CD4-positive, alpha-beta memory T cell (primary cell): ENCODE measurements at regions of chr19 and their contacts with region 1.

Region 1: DNA sequence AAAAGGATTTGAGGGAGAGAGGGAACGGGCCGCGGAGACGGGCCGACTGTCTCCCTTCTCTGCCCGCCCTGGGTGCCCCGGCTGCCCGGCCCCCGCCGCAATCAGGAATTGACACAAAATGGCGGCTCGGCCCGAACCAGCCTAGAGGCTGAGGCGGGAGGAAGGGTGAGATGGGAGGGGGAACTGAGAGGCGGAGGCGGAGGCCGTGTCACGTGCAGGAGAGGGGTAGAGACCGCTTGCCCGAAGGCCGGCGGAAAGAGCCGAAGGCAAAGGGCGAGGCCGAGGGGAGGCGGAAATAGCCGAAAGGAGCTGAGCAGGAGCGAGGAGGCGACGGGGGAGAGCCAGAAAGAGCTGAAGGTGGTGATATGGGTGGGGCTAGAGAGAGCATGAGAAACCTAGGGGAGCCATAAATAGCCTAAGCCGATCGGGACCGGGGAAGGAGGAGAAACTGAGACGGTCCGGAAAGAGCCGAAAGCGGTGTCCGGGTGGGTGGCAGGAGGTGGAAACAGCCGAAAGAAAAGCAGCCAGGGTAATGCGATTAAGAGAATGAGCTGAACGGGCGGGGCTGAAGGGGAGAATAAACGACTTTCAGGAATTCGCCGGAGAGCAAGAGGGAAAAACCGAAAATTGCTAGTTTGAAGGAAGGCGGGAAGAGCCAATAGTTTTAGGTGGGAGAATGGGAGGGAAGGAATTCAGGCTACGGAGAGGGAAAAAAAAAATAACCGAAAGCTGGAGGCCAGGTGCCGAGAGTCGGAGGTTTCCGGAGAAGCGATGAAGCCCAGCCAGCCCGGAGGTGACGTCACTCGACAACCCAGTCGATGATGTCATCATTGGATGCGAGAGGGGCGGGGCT is at the start of gene ZC3H4:
- DNase-seq: peak; percentile 100
- H3K4me3 ChIP-seq: peak within 1 kb of the TSS; percentile 90 to 95
- H3K4me3 Mint-ChIP-seq: peak within 1 kb of the TSS; percentile 97 to 100 (median 98)
- H3K27ac ChIP-seq: peak within 1 kb of the TSS; percentile 98
- H3K27ac Mint-ChIP-seq: peak within 1 kb of the TSS; percentile 99 to 100 (median 100)
- H3K4me1 ChIP-seq: peaks cover 28% of the 10 kb centered on the region
- H3K4me1 Mint-ChIP-seq: peaks cover 17 to 46% (median 28%) of the 10 kb centered on the region in 4 donors
- H3K27me3 ChIP-seq: no peaks in the 10 kb centered on the region
- H3K27me3 Mint-ChIP-seq: no peaks in the 10 kb centered on the region
- total RNA-seq, gene ZC3H4: 74.8 to 75.7 TPM

Region 2: GRCh38 chr19:46717034-46717723 is 396.0 kb before region 1 on chr19 and contains the start of gene PRKD2:
- CTCF ChIA-PET with region 1: no interaction called
- POLR2A ChIA-PET with region 1: interaction called, 17 read pairs
- intact Hi-C with region 1: no loop called
- DNase-seq: peak; percentile 76 to 85 (median 79)
- H3K4me3 ChIP-seq: peak within 1 kb of the TSS; percentile 82 to 94
- H3K4me3 Mint-ChIP-seq: peak within 1 kb of the TSS; percentile 93 to 98 (median 94)
- H3K27ac ChIP-seq: peak within 1 kb of the TSS; percentile 95
- H3K27ac Mint-ChIP-seq: peak within 1 kb of the TSS; percentile 97 to 99 (median 98)
- H3K4me1 ChIP-seq: peaks cover 44% of the 10 kb centered on the region
- H3K4me1 Mint-ChIP-seq: peaks cover 23 to 64% (median 37%) of the 10 kb centered on the region in 4 donors
- H3K27me3 ChIP-seq: no peaks in the 10 kb centered on the region
- H3K27me3 Mint-ChIP-seq: no peaks in the 10 kb centered on the region
- total RNA-seq, gene PRKD2: 115 to 122 TPM

Region 3: DNA sequence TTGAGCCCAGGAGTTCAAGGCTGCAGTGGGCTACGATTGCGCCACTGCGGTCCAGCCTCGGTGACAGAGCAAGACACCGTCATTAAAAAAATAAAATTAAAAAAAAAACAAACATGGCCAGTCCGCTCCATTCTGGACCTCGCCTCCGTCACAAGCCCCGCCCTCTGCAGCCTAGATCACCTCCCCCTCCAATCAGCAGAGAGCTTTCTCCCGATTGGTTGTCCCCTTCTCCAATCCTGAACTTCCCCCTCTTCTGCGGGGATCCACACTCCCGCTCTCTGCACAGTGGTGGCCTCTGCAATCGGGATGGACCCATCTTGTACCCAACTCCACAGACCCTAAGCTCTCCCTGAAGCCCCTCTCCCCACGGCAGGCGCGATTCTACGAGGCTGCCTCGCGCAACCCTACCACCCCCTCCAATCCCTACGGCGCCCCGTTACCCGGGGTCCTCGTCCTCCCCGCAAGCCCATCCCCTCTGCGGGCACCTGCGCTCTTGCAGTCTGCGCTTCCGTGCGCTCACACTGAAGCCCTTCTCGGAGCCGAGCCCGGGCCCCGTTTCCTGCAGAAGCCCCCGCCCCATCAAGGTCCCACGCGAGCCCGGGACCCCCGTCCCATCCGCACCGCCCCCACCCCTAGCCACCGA is 65.3 kb before region 1 on chr19:
- CTCF ChIA-PET with region 1: no interaction called
- POLR2A ChIA-PET with region 1: interaction called, 20 read pairs
- intact Hi-C with region 1: loop called (anchors 1 kb)
- DNase-seq: peak; percentile 59 to 82 (median 63)
- H3K4me3 ChIP-seq: peak overlapping the region; percentile 61 to 71
- H3K4me3 Mint-ChIP-seq: peak overlapping the region; percentile 95 to 98 (median 97)
- H3K27ac ChIP-seq: peak overlapping the region; percentile 68
- H3K27ac Mint-ChIP-seq: peak overlapping the region; percentile 67 to 98 (median 96)
- H3K4me1 ChIP-seq: peaks cover 13% of the 10 kb centered on the region
- H3K4me1 Mint-ChIP-seq: peaks cover 7 to 21% (median 14%) of the 10 kb centered on the region in 4 donors
- H3K27me3 ChIP-seq: no peaks in the 10 kb centered on the region
- H3K27me3 Mint-ChIP-seq: no peaks in the 10 kb centered on the region

Region 4: DNA sequence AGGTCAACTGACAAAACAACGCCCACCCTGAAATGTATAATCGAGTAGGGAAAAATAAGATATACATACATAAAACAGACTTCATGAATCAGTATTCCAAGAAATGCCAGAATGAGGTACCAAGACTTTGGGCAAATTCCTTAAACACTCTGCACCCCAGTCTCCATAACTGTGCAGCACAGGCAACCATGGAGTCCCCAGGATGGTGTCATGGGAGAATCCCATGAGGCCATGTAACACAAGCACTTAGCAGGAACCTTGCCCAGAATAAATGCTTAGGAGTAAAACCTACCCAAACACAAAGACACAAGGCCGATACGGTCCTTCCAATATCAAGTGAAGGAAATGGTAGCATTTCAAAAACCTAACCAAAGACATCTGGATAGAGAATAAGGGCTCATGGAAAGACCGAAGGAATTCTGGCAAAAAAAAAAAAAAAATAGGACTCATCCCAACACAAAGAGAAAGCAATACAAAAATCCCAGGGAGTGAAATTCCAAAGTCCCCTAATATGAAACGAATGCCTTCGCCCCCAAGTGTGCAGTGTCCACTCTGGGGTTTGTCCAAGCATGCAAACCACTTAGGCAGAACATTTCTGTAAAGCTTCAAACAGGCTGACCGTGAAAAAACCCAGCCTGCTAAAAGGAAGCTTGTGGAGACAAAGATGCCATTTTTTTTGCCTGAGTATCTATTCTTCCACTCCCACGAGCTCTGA is 10.7 kb before region 1 on chr19:
- CTCF ChIA-PET with region 1: interaction called, 35 read pairs
- POLR2A ChIA-PET with region 1: interaction called, 307 read pairs
- intact Hi-C with region 1: no loop called
- DNase-seq: no peak
- H3K4me3 ChIP-seq: no peak overlapping the region
- H3K4me3 Mint-ChIP-seq: no peak overlapping the region
- H3K27ac ChIP-seq: no peak overlapping the region
- H3K27ac Mint-ChIP-seq: peak overlapping the region in 2 of 7 donors; percentile 64 to 75
- H3K4me1 ChIP-seq: peaks cover 45% of the 10 kb centered on the region
- H3K4me1 Mint-ChIP-seq: peaks cover 32 to 72% (median 49%) of the 10 kb centered on the region in 4 donors
- H3K27me3 ChIP-seq: no peaks in the 10 kb centered on the region
- H3K27me3 Mint-ChIP-seq: no peaks in the 10 kb centered on the region

Region 5: DNA sequence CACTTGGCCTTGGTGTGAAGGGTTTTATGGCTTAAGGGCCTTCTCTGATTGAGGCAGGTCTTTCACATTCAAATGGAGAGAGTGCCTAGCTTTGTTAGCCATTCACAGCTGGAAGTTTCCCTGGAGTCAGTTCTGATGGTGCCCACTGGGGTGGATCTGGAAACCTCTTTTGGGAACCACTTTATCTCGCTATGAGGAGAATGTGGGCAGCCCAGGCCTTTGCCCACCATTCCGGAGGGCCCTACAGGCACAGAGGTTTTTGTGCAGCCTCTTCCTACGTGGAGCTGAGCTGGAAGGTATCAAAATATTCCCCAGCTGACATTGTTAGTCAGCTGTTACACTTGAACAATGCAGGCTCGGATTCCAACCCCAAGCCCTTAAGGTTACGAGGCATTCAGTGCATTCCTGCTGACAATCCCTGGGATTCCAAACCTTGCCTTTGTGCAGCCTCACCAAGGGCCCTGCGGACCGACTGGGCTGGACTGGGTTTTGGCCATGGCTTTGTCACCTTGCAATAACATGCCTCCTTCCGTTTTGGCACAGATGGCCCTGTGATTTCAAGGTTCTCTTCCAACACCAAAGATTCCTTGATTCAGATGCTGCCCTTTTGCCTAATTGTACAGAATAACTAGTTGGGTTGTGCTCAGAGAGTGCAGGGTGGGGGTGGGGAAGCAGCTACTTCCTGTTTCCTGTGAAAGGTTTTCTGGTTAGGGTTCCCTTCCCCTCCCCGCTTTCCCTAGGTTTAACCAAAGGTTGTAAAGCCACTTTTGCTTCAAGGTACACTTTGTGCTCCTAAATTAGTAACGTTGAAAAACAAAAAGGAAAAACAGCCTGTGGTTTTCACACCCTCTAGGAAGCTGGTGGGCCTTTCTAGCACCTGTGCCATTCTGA is 44.5 kb after region 1 on chr19:
- CTCF ChIA-PET with region 1: no interaction called
- POLR2A ChIA-PET with region 1: interaction called, 29 read pairs
- intact Hi-C with region 1: no loop called
- DNase-seq: peak; percentile 45 to 56 (median 53)
- H3K4me3 ChIP-seq: peak overlapping the region; percentile 17 to 40
- H3K4me3 Mint-ChIP-seq: peak overlapping the region; percentile 62 to 90 (median 84)
- H3K27ac ChIP-seq: peak overlapping the region; percentile 43
- H3K27ac Mint-ChIP-seq: peak overlapping the region; percentile 76 to 98 (median 95)
- H3K4me1 ChIP-seq: peaks cover 75% of the 10 kb centered on the region
- H3K4me1 Mint-ChIP-seq: peaks cover 40 to 74% (median 60%) of the 10 kb centered on the region in 4 donors
- H3K27me3 ChIP-seq: no peaks in the 10 kb centered on the region
- H3K27me3 Mint-ChIP-seq: no peaks in the 10 kb centered on the region

Region 6: GRCh38 chr19:47256688-47257443 is 143.6 kb after region 1 on chr19:
- CTCF ChIA-PET with region 1: no interaction called
- POLR2A ChIA-PET with region 1: interaction called, 16 read pairs
- intact Hi-C with region 1: no loop called
- DNase-seq: peak; percentile 97 to 99 (median 98)
- H3K4me3 ChIP-seq: peak overlapping the region; percentile 61 to 62
- H3K4me3 Mint-ChIP-seq: peak overlapping the region; percentile 88 to 98 (median 94)
- H3K27ac ChIP-seq: peak overlapping the region; percentile 76
- H3K27ac Mint-ChIP-seq: peak overlapping the region; percentile 94 to 99 (median 99)
- H3K4me1 ChIP-seq: peaks cover 18% of the 10 kb centered on the region
- H3K4me1 Mint-ChIP-seq: peaks cover 20 to 44% (median 31%) of the 10 kb centered on the region in 4 donors
- H3K27me3 ChIP-seq: no peaks in the 10 kb centered on the region
- H3K27me3 Mint-ChIP-seq: no peaks in the 10 kb centered on the region